ENCODE measurements at regions of chr3 and their contacts with region 1.

Region 1: GRCh38 chr3:153291056-153291685 is 129.1 kb downstream of the RAP2B start:
- DNase-seq: peak in 1 of 9 donors; percentile 14
- ATAC-seq: peak; percentile 66
- H3K4me3 ChIP-seq: no peak overlapping the region
- H3K4me3 Mint-ChIP-seq: no peak overlapping the region
- H3K27ac ChIP-seq: no peak overlapping the region
- H3K27ac Mint-ChIP-seq: peak overlapping the region in 4 of 9 donors; percentile 19 to 59 (median 41)
- H3K4me1 ChIP-seq: peaks cover 9 to 19% of the 10 kb centered on the region in 2 donors
- H3K4me1 Mint-ChIP-seq: peaks cover 26 to 48% (median 46%) of the 10 kb centered on the region in 7 donors
- H3K27me3 ChIP-seq: no peaks in the 10 kb centered on the region
- H3K27me3 Mint-ChIP-seq: no peaks in the 10 kb centered on the region

Region 2: GRCh38 chr3:153043729-153044328 is 247.3 kb before region 1 on chr3:
- CTCF ChIA-PET with region 1: interaction called, 15 read pairs
- POLR2A ChIA-PET with region 1: no interaction called
- intact Hi-C with region 1: loop called (anchors 1 kb)
- DNase-seq: no peak
- ATAC-seq: no peak
- H3K4me3 ChIP-seq: no peak overlapping the region
- H3K4me3 Mint-ChIP-seq: no peak overlapping the region
- H3K27ac ChIP-seq: no peak overlapping the region
- H3K27ac Mint-ChIP-seq: no peak overlapping the region
- H3K4me1 ChIP-seq: no peaks in the 10 kb centered on the region
- H3K4me1 Mint-ChIP-seq: peaks cover 0 to 10% (median 2%) of the 10 kb centered on the region in 7 donors
- H3K27me3 ChIP-seq: no peaks in the 10 kb centered on the region
- H3K27me3 Mint-ChIP-seq: peaks cover 0 to 8% (median 0%) of the 10 kb centered on the region in 5 donors

Region 3: GRCh38 chr3:153173758-153174516 is 117.2 kb before region 1 on chr3:
- CTCF ChIA-PET with region 1: interaction called, 10 read pairs
- POLR2A ChIA-PET with region 1: interaction called, 3 read pairs
- intact Hi-C with region 1: no loop called
- DNase-seq: no peak
- ATAC-seq: peak; percentile 37
- H3K4me3 ChIP-seq: no peak overlapping the region
- H3K4me3 Mint-ChIP-seq: no peak overlapping the region
- H3K27ac ChIP-seq: no peak overlapping the region
- H3K27ac Mint-ChIP-seq: peak overlapping the region in 4 of 9 donors; percentile 10 to 62 (median 54)
- H3K4me1 ChIP-seq: no peaks in the 10 kb centered on the region
- H3K4me1 Mint-ChIP-seq: peaks cover 5 to 32% (median 17%) of the 10 kb centered on the region in 7 donors
- H3K27me3 ChIP-seq: no peaks in the 10 kb centered on the region
- H3K27me3 Mint-ChIP-seq: no peaks in the 10 kb centered on the region

Region 4: DNA sequence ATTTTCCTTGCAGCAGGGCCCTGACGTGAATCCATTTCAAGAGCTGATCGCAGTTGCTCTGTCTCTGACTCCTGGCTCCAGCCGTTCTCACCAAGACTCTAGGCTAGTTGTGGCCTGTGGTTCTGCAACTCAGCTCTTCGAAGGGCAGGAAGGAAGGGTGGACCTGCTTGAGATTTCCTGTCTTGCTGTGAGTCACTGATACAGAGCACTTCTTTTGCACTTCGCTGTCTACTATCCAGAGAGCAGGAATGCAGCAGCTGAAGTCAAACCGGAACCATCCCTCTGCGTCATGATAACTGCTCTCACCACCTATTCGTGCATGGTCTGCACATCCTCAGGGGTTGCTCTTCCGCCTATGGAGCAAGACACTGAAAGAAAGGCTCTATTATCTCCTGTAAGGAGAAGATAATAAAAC is 69.4 kb before region 1 on chr3:
- CTCF ChIA-PET with region 1: interaction called, 19 read pairs
- POLR2A ChIA-PET with region 1: interaction called, 26 read pairs
- intact Hi-C with region 1: loop called (anchors 1 kb)
- DNase-seq: peak; percentile 31 to 88 (median 82)
- ATAC-seq: peak; percentile 97
- H3K4me3 ChIP-seq: peak overlapping the region; percentile 39
- H3K4me3 Mint-ChIP-seq: peak overlapping the region; percentile 66 to 89 (median 84)
- H3K27ac ChIP-seq: peak overlapping the region; percentile 70
- H3K27ac Mint-ChIP-seq: peak overlapping the region in 8 of 9 donors; percentile 90 to 98 (median 96)
- H3K4me1 ChIP-seq: peaks cover 35 to 61% of the 10 kb centered on the region in 2 donors
- H3K4me1 Mint-ChIP-seq: peaks cover 6 to 73% (median 58%) of the 10 kb centered on the region in 7 donors
- H3K27me3 ChIP-seq: no peaks in the 10 kb centered on the region
- H3K27me3 Mint-ChIP-seq: no peaks in the 10 kb centered on the region

Region 5: DNA sequence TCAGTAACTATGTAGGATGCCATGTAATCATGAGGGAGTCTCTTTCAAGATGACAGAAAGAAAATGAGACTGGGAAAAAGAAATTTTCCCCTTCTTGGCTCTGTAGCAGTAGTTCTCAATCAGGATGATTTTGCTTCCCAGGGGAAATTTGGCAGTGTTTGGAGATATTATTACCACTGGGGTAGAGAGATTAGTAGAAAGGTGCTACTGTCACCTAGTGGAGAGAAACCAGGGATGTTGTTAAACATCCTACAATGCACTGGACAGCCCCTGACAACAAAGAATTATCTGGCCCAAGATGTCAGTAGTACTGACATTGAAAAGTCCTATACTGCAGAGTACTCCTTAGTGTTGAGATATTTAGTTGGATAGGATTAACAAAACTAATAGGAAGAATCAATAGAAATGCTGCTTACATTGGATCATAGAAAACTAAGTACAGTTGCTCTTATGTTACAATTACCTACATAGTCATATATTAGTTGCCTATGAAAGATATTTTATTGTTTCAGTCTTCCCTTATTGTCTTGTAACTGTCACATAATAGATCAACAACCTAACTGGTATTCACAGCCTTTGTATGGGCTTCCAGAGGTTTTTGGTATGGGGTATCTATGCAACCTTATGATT is 304.1 kb after region 1 on chr3:
- CTCF ChIA-PET with region 1: no interaction called
- POLR2A ChIA-PET with region 1: no interaction called
- intact Hi-C with region 1: loop called (anchors 1 to 5 kb)
- DNase-seq: peak in 5 of 9 donors; percentile 1 to 25 (median 11)
- ATAC-seq: peak; percentile 45
- H3K4me3 ChIP-seq: no peak overlapping the region
- H3K4me3 Mint-ChIP-seq: no peak overlapping the region
- H3K27ac ChIP-seq: no peak overlapping the region
- H3K27ac Mint-ChIP-seq: no peak overlapping the region
- H3K4me1 ChIP-seq: no peaks in the 10 kb centered on the region
- H3K4me1 Mint-ChIP-seq: peaks cover 0 to 15% (median 6%) of the 10 kb centered on the region in 7 donors
- H3K27me3 ChIP-seq: no peaks in the 10 kb centered on the region
- H3K27me3 Mint-ChIP-seq: no peaks in the 10 kb centered on the region

Region 6: DNA sequence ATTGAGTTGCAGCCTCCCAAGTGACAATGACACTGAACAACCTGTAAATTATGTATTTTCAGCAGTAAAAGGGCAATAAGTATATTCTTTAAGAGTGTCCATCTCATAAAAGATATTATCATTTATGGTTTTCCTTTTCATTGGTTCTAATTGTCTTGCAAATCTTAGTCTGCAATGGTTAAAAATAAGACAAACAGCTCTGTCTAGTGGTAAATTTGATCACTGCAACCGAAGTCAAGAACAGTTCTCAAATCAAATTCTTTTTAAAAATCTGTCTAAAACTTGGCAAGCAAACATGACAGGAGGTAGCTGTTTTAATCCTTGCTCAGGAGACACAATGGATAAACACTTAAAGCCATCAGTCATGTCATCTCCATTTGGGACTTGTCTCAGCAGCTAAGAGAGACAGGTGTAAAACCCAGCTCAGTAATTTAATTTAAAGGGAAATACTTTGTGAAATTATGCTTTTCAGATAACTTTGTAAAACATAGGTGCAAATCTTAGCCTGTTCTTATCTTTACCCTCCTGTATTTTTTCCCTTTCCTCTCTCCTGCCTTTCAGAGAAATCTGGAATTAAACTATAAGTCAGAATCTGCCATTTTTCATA is 679.7 kb after region 1 on chr3:
- CTCF ChIA-PET with region 1: no interaction called
- POLR2A ChIA-PET with region 1: no interaction called
- intact Hi-C with region 1: loop called in 1 of 2 experiments (anchors 2 kb)
- DNase-seq: no peak
- ATAC-seq: no peak
- H3K4me3 ChIP-seq: no peak overlapping the region
- H3K4me3 Mint-ChIP-seq: no peak overlapping the region
- H3K27ac ChIP-seq: no peak overlapping the region
- H3K27ac Mint-ChIP-seq: no peak overlapping the region
- H3K4me1 ChIP-seq: no peaks in the 10 kb centered on the region
- H3K4me1 Mint-ChIP-seq: no peaks in the 10 kb centered on the region
- H3K27me3 ChIP-seq: peaks cover 0 to 3% of the 10 kb centered on the region in 2 donors
- H3K27me3 Mint-ChIP-seq: peaks cover 3 to 32% (median 23%) of the 10 kb centered on the region in 5 donors

Region 7: GRCh38 chr3:154252759-154253638 is 961.8 kb after region 1 on chr3:
- CTCF ChIA-PET with region 1: no interaction called
- POLR2A ChIA-PET with region 1: no interaction called
- intact Hi-C with region 1: loop called in 1 of 2 experiments (anchors 5 kb)
- DNase-seq: peak; percentile 16 to 67 (median 49)
- ATAC-seq: peak; percentile 84
- H3K4me3 ChIP-seq: no peak overlapping the region
- H3K4me3 Mint-ChIP-seq: no peak overlapping the region
- H3K27ac ChIP-seq: no peak overlapping the region
- H3K27ac Mint-ChIP-seq: peak overlapping the region in 1 of 9 donors; percentile 48
- H3K4me1 ChIP-seq: no peaks in the 10 kb centered on the region
- H3K4me1 Mint-ChIP-seq: peaks cover 0 to 5% (median 0%) of the 10 kb centered on the region in 7 donors
- H3K27me3 ChIP-seq: no peaks in the 10 kb centered on the region
- H3K27me3 Mint-ChIP-seq: no peaks in the 10 kb centered on the region

Measured in naive thymus-derived CD4-positive, alpha-beta T cell (primary cell).